ENCODE measurements at regions of chr22 and their contacts with region 1.

Region 1: GRCh38 chr22:43783777-43784176 is 28.3 kb downstream of the EFCAB6 start:
- DNase-seq: no peak

Region 2: DNA sequence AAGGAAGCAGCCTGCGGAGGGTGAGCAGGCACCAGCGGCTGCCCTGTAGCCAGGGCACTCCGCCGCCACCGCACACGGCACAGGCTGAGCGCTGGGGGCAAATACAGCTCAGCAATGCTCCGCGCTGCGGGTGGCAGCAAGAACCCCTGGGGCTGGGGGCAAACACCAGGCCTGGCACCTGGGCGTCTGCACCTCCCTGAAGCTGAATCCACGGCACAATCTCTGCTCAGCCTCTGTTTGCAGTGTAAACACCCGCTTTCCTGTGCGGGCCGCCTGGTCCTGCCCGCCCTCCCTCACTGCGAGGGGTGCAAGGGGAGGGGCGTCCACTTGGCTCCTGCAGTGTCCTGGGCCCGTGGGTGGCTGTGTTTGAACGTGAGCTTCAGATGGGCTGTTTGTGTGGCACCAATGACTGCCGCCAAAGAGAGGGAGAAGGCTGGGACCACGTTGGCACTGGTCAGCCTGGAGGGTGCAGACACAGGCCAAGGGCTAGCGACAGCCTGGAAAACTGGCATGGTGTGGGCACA is 386.8 kb before region 1 on chr22:
- intact Hi-C with region 1: loop called in 1 of 2 experiments (anchors 2 kb)
- DNase-seq: no peak

Measured in posterior vena cava (tissue), 2 donors.